Head of caudate nucleus (tissue), 42 donors: ENCODE measurements at regions of chr2 and their contacts with region 1.

Region 1: DNA sequence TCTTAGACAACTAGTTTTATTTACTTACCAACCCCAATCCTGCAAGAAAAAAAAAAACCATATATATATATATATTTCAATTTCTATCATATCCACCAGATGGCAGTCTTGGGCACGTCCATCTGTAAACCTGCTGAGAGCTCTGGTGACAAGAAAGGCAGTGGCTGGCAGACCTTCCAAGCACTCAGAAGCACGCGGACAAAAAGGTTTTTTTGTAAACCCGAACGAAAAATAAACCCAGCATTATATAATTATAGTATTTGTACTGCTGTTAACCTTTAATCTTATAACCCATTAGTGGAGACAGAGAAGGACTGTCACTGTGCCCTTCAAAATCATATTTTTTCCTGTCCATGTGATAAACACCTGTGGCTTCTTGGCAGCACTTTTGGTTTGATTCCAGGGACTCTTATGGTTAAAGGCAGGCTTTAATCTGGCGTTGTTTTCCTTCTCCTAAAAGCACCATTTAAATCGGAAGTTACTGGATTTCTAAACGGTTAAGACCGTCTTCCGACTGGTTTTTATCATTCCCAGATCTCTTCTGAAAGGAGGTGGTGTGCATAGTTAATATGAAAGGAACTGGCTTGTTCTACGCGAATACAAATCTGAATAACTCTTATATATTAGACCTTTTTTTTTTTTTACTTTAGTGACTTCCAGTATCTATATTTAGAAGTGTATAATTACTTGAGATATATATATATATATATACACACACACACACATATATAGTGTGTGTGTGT is 31.0 kb upstream of the SLC3A1 start:
- DNase-seq: peak; percentile 18 to 86 (median 65)

Region 2: DNA sequence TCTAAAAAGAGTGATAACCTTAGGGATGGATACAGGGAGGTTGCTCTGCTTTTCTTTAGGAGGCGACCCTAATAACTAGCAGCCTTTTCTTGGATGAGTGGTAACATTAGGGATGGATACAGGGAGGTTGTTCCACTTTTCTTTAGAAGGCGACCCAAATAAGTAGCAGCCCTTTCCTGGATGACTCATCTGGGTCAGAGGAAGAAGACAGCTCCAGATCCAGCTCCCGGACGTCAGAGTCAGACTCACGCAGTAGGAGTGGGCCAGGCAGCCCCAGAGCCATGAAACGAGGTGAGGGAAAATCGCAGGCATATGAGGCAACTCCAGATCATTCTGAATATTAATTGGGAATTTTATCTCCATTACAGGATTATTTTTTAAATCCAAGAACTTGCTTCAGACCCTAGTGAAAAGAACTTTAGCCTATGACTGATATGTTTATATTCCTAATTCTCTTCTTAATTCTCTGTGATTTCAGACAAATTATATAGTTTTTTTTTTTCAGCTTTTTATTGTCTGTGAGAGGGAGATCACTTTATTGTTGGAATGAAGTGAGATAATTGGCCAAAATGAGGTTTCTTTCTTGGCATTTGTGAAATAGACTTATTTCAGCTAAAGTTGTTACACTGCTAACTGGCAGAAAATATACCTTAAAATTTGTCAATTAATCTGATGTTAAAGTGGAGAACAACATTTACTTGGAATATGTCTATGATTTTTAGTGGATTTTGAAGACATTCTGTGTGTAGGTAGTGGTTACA is 536.9 kb before region 1 on chr2:
- intact Hi-C with region 1: no loop called
- DNase-seq: peak in 15 of 42 donors; percentile 3 to 81 (median 28)

Region 3: DNA sequence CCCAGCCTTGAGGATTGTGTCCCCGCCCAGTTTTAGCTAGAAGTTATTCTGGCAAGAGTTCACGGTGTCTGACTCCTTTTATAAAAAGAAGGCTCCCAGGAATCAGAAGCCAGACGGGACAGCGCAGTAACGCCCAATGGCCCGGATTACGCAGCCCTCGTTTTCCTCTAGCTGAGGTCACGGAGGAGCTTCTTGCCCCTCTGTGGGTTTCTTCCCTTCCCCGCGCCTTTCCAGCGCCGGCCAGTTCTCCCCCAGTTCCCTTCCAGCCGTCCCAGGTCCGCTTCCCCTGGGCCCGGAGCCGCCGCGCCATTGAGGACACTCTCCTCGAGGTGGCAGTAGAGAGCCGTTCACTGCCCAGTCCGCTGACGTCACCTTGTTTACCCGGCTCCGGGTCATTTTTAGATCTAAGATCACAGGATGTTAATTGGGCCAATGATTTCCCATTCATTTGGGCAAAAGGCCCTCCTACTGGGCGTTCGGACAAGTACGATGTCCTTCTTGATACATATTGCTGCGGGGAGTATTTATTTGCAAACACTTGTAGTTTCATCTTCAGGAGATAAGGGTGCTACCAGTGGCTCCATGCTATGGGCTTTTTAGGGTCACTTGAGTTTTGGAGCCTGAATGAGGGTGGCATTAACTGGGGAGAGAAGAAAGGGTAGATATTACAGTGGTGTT is 157.1 kb before region 1 on chr2:
- intact Hi-C with region 1: loop called (anchors 10 kb)
- DNase-seq: peak; percentile 77 to 97 (median 91)

Region 4: GRCh38 chr2:44167940-44168680 is 76.2 kb before region 1 on chr2:
- intact Hi-C with region 1: loop called (anchors 10 kb)
- DNase-seq: peak; percentile 95 to 100 (median 100)

Region 5: DNA sequence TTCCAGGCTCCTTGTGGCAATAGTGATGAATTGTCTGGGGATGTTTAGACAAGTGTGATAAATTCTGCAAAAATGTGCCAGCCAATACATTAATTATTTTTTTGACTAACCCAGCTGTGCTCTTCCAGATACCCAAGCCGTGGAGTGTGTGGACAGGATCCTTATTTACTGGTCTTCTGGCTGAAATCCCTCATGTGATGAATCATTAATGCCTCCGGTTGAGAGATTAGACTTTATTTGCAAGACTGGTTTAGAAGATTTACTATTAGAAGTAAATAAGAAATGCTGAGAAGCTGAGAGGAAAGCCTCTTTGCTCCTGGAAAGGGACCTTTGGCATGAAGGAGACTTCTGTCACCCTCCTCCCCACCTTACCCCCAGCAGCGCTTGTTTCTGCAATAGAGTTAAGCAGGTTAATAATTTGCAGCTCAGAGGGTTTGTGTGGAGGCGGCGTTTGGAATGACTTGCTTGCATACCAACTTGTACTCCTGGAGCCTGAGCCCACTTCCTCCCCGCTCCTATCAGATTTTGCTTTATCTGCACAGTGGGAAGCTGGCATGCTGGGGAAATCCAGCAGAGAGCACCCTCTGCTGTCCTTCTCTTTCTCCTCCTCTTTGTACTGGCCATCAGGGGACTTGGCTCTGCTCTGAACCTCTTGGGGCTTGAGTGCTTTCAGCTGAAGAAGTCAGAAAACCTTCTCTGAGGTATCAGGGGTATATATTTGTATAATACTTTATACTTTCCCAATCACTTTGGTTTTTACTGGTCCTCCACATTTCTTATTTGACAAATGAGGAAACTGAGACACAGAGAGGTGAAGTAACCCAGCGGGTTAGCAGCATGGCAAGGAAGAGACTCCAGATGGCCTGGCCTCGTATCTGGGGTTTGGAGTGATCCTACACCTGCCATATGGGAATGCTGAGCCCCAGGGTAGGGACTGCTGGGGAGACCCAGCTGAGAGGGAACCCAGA is 47.3 kb after region 1 on chr2:
- intact Hi-C with region 1: loop called (anchors 5 kb)
- DNase-seq: peak; percentile 56 to 92 (median 80)